ENCODE measurements at regions of chr2 and their contacts with region 1.

Region 1: DNA sequence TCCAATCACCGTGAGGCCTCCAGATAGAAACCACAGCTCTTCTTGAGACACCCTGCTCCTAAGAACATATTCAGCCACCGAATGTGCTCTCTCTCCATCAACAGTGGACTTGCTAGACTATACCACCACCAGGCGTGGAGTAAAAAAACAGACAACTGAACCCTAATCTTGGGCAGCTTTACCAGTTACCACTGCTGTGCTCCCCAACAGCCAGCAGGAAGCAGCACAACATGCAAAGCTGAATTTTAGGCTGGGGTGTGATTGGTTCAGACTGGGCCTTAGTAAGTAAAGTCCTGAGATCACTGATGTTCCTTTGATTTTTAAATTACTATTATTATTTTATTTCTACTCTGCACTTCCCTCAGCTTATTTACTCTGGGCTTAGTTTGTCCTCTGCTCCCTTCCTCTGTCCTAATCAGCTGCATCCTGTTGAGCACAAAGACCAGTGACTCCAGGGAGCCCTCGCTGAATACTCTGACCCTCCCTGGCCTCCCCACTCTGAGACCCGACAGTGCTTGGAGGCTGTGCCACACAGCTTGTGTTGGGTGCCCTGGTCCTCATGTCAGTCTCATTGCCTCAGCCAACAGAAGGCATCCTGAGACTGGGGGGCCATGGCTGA is 21.9 kb downstream of the MRPL35 start:
- DNase-seq: peak; percentile 77
- H3K4me3 Mint-ChIP-seq: no peak overlapping the region
- H3K27ac Mint-ChIP-seq: no peak overlapping the region
- H3K4me1 Mint-ChIP-seq: peaks cover 10% of the 10 kb centered on the region
- H3K27me3 Mint-ChIP-seq: no peaks in the 10 kb centered on the region

Region 2: DNA sequence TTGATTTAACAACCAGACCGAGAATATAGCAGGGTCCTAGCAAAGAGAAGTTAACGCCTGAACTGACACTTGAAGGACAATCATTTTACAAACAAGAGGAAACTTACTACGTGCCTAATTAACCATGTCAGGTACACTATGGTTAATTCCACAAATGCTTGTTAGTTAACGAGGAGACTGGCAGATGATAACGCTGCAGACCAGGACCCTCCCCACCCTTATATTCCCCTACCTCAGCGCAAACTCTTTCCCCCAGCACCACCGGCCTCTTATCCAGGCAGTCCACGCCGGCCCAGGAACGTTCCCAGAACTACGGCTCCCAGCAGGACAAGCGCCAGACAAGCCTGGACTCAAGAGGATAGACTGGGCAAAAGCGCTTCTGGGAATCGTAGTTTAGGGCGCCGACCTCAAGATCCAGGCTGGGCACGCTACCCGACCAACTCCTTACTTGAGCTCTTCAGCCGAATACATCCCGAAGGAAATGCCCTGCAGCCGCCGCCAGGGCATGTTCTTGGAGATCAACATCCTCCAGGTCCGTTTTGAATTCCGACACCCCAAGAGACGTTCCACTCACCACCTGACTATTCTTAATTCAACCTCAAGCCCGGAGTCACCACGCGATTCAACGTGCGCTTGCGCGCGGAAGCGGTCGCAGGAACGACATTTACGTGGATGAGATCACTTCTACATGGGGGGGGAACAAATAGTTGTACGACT is 115.8 kb before region 1 on chr2 and contains the start of gene POLR1A:
- CTCF ChIA-PET with region 1: no interaction called
- POLR2A ChIA-PET with region 1: no interaction called
- intact Hi-C with region 1: no loop called
- DNase-seq: peak; percentile 90
- H3K4me3 Mint-ChIP-seq: peak within 1 kb of the TSS; percentile 94
- H3K27ac Mint-ChIP-seq: peak within 1 kb of the TSS; percentile 95
- H3K4me1 Mint-ChIP-seq: peaks cover 61% of the 10 kb centered on the region
- H3K27me3 Mint-ChIP-seq: no peaks in the 10 kb centered on the region
- total RNA-seq, gene POLR1A: 27.2 to 33.8 TPM

Region 3: DNA sequence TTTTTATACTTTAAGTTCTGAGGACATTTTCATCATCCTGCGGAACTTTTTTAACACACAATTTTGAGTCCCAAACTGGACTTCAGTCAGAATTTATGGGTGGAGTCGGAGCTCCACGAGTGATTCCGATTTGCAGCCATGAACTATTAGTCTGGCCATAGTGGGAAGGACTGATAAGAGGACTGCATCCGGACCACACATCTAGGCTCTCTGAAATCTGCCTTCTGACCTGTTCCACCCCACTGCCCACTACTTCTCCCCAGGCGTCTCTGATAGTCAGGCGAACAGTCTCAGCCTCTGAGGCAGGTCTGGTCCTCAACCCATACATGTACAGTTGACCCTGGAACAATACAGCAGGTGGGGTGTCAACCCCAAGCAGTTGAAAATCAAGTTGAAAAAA is 16.7 kb before region 1 on chr2:
- CTCF ChIA-PET with region 1: interaction called, 10 read pairs
- POLR2A ChIA-PET with region 1: no interaction called
- intact Hi-C with region 1: no loop called
- DNase-seq: no peak
- H3K4me3 Mint-ChIP-seq: no peak overlapping the region
- H3K27ac Mint-ChIP-seq: no peak overlapping the region
- H3K4me1 Mint-ChIP-seq: peaks cover 26% of the 10 kb centered on the region
- H3K27me3 Mint-ChIP-seq: no peaks in the 10 kb centered on the region

Region 4: DNA sequence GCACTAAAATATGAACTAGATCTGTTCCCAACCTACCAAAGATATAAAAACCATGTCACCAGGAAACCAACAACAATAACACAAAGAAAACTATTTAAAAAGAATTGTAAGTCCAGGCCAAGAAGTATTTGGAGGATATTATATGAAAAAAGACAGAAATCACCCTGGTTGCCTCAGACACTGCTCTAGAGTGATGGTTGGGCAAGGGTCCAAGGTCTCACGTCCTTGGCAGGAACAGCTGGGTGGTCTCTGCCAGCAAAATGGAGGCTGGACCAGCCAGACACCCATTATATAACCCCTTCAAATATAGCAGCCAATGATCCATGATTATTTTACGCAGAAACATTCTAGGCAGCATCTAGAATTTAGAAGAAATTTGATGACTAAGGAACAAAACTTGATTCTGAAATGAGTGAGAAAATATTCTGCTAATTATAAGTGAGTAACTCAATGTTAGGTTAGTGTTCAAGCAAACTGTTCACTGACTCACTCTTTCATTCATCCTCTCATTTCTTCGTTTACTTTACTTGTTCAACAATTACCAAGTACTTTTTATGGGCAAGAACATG is 13.5 kb after region 1 on chr2:
- CTCF ChIA-PET with region 1: interaction called, 12 read pairs
- POLR2A ChIA-PET with region 1: no interaction called
- intact Hi-C with region 1: no loop called
- DNase-seq: no peak
- H3K4me3 Mint-ChIP-seq: no peak overlapping the region
- H3K27ac Mint-ChIP-seq: no peak overlapping the region
- H3K4me1 Mint-ChIP-seq: peaks cover 7% of the 10 kb centered on the region
- H3K27me3 Mint-ChIP-seq: no peaks in the 10 kb centered on the region

Region 5: DNA sequence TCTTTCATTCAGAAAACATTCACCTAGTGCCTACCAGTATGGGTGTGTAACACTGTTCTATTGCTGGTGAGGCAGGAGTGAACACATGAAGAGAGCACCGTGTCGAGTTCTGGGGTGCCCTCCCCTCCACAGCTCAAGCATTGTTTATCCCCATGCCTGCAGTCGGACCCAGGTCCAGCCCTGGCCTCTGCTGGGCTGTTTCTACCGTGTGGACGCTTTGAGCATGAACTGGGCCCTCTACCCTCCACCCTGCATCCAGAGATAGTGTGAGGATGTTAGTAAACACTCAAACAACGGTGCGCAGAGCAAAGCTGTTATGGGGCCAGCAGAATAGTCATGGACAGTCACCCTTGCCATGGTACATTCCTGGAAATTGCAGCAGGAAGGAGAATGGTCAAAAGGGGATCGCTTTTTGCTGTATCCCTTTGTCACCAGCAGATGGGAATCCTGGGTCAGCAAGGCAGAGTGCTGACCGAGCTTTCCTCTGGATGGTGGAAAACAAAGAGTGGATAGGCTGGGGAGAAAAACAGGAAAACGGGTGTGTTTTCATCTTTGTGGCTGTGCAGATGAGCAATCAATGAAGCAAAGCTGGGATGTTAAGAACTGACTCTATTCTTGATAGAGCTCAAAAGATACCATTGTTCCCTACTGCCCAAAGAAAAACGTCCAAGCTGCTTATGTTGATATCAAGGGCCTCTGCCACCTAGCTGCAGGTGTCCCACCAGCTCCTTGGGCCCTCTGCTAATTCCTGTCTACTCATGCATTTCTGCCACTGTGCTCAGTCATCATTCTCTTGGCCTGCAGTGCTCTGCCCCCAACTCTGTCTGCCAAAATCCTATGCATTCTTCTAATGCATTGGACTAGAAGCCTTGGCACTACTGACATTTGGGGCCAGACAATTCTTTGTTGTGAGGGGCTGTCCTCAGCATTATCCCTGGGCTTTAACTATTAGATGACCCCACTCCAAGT is 77.5 kb after region 1 on chr2:
- CTCF ChIA-PET with region 1: interaction called, 36 read pairs
- POLR2A ChIA-PET with region 1: no interaction called
- intact Hi-C with region 1: loop called (anchors 1 kb)
- DNase-seq: no peak
- H3K4me3 Mint-ChIP-seq: no peak overlapping the region
- H3K27ac Mint-ChIP-seq: no peak overlapping the region
- H3K4me1 Mint-ChIP-seq: no peaks in the 10 kb centered on the region
- H3K27me3 Mint-ChIP-seq: peaks cover 18% of the 10 kb centered on the region

Region 6: DNA sequence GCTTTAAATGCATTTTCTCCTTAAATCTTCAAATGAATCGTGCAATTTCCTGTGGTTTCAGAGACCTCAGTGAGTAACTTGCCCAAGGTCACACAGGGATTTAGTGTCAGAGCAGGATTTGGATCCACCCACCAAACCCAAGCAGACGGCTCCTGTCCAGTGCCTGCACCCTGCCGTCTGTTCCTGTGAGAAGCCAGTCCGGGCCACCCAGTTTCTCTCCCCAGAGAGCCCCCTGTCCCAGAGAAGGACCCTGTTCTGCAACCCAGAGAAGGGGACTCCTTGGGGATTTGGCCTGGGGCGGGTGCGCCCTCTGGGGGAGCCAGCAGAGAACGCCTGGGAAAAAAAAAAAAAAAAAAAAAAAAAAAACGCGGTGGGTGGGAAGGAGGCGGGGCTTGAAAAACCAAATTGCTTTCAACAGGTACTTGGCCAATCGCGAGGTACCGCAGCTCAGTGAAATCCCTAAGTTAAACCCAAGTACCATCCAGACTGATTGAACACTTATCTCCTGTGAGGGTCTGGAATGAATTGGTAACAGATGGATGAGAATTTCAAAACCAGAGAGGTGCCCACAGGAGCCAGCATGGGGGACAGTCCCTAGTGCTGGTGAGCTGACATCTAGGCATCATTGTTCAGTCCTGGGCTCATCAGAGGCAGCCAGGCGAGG is 147.1 kb after region 1 on chr2:
- CTCF ChIA-PET with region 1: interaction called, 56 read pairs
- POLR2A ChIA-PET with region 1: no interaction called
- intact Hi-C with region 1: loop called (anchors 1 kb)
- DNase-seq: peak; percentile 54
- H3K4me3 Mint-ChIP-seq: peak overlapping the region; percentile 54
- H3K27ac Mint-ChIP-seq: peak overlapping the region; percentile 2
- H3K4me1 Mint-ChIP-seq: peaks cover 30% of the 10 kb centered on the region
- H3K27me3 Mint-ChIP-seq: no peaks in the 10 kb centered on the region